CD4-positive, alpha-beta memory T cell (primary cell): ENCODE measurements at regions of chr12 and their contacts with region 1.

Region 1: GRCh38 chr12:27710592-27711316 is at the start of gene MRPS35:
- DNase-seq: peak; percentile 90 to 92 (median 91)
- H3K4me3 ChIP-seq: peak within 1 kb of the TSS; percentile 52 to 78
- H3K4me3 Mint-ChIP-seq: peak within 1 kb of the TSS; percentile 92 to 100 (median 98)
- H3K27ac ChIP-seq: peak within 1 kb of the TSS; percentile 70
- H3K27ac Mint-ChIP-seq: peak within 1 kb of the TSS; percentile 90 to 99 (median 97)
- H3K4me1 ChIP-seq: peaks cover 25% of the 10 kb centered on the region
- H3K4me1 Mint-ChIP-seq: peaks cover 15 to 44% (median 29%) of the 10 kb centered on the region in 4 donors
- H3K27me3 ChIP-seq: no peaks in the 10 kb centered on the region
- H3K27me3 Mint-ChIP-seq: no peaks in the 10 kb centered on the region
- total RNA-seq, gene MRPS35: 20.3 to 21.1 TPM

Region 2: DNA sequence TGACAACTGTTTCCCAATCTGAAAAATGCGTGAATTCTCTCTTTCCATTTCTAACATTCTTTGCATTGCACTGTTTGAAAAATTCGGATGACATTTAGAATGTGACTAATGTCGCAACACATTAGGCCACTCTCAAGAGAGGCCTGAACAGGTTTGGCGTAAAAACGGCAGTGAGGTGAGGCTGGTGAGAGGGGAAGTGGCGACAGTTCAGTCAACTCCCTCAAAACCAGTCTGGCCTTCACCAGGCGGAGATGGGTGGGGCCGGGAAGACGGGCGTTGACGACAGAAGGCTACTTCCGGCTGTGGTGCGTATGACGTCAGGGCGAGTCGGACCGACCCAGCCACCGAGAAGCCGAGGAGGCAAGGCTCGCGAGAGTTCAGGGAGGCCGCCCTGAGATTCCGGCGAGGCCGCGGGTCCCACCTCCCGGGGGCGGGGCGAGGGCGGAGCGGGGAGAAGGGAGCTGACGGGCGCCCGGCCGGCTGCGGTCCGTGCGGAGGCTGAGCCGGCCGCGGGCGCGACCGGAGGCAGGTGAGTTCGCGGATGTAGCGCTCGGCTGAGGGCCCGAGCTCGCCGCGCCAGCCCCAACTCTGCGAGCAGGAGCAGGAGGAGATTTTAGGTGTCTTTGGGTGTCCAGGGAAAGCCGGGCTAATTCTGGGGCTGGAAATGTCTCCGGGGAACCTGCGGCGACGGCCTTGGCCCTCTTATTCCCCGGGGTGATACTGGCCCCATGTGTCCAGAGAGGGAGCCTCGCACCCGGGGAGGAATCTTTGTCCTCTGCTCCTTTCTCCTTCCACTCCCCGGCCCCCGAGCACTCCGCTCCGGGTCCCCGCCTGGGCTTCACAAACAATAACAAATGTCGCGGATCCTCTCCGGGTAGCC is 466.7 kb before region 1 on chr12 and contains the start of gene STK38L:
- CTCF ChIA-PET with region 1: no interaction called
- POLR2A ChIA-PET with region 1: no interaction called
- intact Hi-C with region 1: loop called (anchors 1 kb)
- DNase-seq: peak; percentile 95 to 97 (median 97)
- H3K4me3 ChIP-seq: peak within 1 kb of the TSS; percentile 85 to 87
- H3K4me3 Mint-ChIP-seq: peak within 1 kb of the TSS; percentile 97 to 99 (median 98)
- H3K27ac ChIP-seq: peak within 1 kb of the TSS; percentile 77
- H3K27ac Mint-ChIP-seq: peak within 1 kb of the TSS; percentile 93 to 99 (median 99)
- H3K4me1 ChIP-seq: peaks cover 27% of the 10 kb centered on the region
- H3K4me1 Mint-ChIP-seq: peaks cover 32 to 58% (median 47%) of the 10 kb centered on the region in 4 donors
- H3K27me3 ChIP-seq: no peaks in the 10 kb centered on the region
- H3K27me3 Mint-ChIP-seq: no peaks in the 10 kb centered on the region
- total RNA-seq, gene STK38L: 17.2 to 21.8 TPM

Region 3: DNA sequence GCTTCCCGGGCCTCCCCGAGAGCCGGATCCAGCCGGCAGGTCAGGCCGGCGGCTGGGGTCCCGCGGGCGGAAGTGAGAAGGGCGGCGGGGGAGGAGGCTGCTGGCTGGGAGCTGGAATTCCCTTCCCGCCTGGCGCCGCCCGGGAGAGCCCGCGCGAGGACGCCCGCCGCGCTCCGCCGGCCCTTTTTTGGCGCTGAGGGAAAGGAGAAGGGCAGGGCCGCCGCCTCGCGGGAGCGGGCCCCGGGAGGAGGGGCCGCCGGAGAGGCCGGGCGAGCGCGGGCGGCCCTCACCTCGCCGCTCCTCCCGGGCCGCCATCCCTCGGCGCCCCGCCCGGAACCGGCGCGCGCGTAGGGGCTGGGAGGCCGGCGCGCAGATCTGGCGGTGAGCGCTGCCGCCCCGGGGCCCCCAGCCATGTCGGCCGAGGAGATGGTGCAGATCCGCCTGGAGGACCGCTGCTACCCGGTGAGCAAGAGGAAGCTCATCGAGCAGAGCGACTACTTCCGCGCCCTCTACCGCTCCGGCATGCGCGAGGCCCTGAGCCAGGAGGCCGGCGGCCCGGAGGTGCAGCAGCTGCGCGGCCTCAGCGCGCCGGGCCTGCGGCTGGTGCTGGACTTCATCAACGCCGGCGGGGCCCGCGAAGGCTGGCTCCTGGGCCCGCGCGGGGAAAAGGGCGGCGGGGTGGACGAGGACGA is 69.3 kb after region 1 on chr12 and contains the starts of genes KLHL42 and MANSC4:
- CTCF ChIA-PET with region 1: no interaction called
- POLR2A ChIA-PET with region 1: interaction called, 11 read pairs
- intact Hi-C with region 1: loop called (anchors 2 kb)
- DNase-seq: peak; percentile 62 to 75 (median 72)
- H3K4me3 ChIP-seq: peak within 1 kb of the TSS; percentile 73 to 74
- H3K4me3 Mint-ChIP-seq: peak within 1 kb of the TSS; percentile 86 to 94 (median 90)
- H3K27ac ChIP-seq: peak within 1 kb of the TSS; percentile 62
- H3K27ac Mint-ChIP-seq: peak within 1 kb of the TSS; percentile 84 to 97 (median 87)
- H3K4me1 ChIP-seq: peaks cover 26% of the 10 kb centered on the region
- H3K4me1 Mint-ChIP-seq: peaks cover 28 to 40% (median 34%) of the 10 kb centered on the region in 4 donors
- H3K27me3 ChIP-seq: no peaks in the 10 kb centered on the region
- H3K27me3 Mint-ChIP-seq: no peaks in the 10 kb centered on the region
- total RNA-seq, gene KLHL42: 19.4 to 20.5 TPM
- total RNA-seq, gene MANSC4: not detected

Region 4: DNA sequence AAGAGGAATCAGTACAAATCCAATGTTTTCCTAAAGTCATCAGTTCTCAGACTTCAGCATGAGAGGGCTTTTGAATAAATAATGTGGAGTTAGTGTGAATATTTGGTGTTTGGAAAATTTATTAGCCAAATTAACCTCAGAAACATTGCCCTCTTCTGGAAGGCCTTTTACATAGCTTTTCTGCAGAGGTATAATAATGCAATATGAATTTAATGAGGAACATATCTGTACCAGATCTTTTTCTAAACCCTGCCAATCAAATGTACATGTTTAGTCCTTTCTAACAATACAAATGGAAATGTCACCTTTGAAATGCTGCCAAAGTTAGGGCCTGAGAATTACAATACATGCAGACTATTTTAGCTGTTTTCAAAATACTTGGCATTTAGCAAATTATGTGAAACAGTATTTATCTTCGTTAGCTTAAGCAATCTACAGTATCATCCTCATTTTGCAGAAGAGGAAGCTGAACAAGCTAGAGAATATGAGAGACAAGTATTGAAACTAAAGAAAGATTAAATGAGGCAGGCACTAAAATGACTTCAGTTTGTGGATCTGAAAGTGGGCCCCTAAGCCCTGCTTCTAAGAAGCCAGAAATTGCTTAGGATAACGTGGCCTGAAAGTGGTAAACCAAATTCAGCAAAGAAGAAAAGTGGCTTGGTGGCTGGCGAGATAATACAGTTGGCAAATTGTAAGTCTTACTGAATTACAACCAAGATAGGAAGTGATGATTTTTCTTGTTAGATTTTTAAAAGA is 129.7 kb after region 1 on chr12:
- CTCF ChIA-PET with region 1: no interaction called
- POLR2A ChIA-PET with region 1: no interaction called
- intact Hi-C with region 1: no loop called
- DNase-seq: no peak
- H3K4me3 ChIP-seq: no peak overlapping the region
- H3K4me3 Mint-ChIP-seq: no peak overlapping the region
- H3K27ac ChIP-seq: no peak overlapping the region
- H3K27ac Mint-ChIP-seq: no peak overlapping the region
- H3K4me1 ChIP-seq: no peaks in the 10 kb centered on the region
- H3K4me1 Mint-ChIP-seq: peaks cover 0 to 2% (median 0%) of the 10 kb centered on the region in 4 donors
- H3K27me3 ChIP-seq: no peaks in the 10 kb centered on the region
- H3K27me3 Mint-ChIP-seq: no peaks in the 10 kb centered on the region

Region 5: DNA sequence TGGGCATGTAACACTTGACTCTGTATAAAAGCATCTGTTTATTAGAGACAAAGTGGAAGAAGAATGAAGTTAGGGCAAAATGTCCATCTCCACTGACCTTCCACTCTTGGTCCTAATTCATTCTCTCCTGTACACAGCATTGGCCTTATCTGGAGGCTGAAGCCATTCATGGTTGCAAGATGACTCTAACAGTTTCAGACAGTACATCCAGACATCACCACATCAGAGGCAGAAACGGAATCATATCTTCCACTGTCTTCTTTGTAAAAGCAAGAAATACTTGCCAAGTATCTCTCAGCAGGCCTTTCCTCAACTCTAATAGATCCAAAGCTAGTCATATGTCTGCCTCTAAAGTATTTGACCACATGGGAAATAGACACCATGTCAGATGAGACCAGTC is 220.6 kb after region 1 on chr12:
- CTCF ChIA-PET with region 1: no interaction called
- POLR2A ChIA-PET with region 1: no interaction called
- intact Hi-C with region 1: no loop called
- DNase-seq: no peak
- H3K4me3 ChIP-seq: no peak overlapping the region
- H3K4me3 Mint-ChIP-seq: no peak overlapping the region
- H3K27ac ChIP-seq: no peak overlapping the region
- H3K27ac Mint-ChIP-seq: no peak overlapping the region
- H3K4me1 ChIP-seq: no peaks in the 10 kb centered on the region
- H3K4me1 Mint-ChIP-seq: no peaks in the 10 kb centered on the region
- H3K27me3 ChIP-seq: no peaks in the 10 kb centered on the region
- H3K27me3 Mint-ChIP-seq: peaks cover 4 to 5% of the 10 kb centered on the region in 2 donors